Testis (tissue), 5 donors: ENCODE measurements at regions of chr9 and their contacts with region 1.

Region 1: GRCh38 chr9:107455425-107456135 is 34.0 kb downstream of the KLF4 start:
- DNase-seq: no peak
- H3K4me3 ChIP-seq: no peak overlapping the region
- H3K27ac ChIP-seq: no peak overlapping the region
- H3K4me1 ChIP-seq: no peaks in the 10 kb centered on the region
- H3K27me3 ChIP-seq: no peaks in the 10 kb centered on the region
- CTCF ChIP-seq: no peak
- POLR2A ChIP-seq: no peak

Region 2: DNA sequence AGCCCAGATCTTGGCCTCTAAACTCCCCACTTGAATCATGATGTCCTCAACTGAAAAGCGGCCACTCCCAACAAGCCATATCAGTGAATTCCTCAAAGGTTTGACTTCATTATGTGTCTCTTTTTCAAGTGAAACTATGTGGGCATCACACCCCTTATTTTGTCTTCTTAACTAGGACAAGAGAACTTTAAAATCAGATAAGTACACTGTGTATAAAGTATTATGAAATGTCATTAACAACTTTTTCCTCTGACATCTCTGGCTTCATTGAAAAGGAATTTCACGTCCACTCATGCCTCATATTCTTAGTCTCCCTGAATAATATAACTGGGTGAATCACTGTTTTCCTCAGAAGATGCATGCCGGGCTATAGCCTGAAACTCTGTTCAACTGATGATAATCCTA is 984.3 kb after region 1 on chr9:
- intact Hi-C with region 1: loop called (anchors 10 kb)
- DNase-seq: no peak
- H3K4me3 ChIP-seq: no peak overlapping the region
- H3K27ac ChIP-seq: no peak overlapping the region
- H3K4me1 ChIP-seq: no peaks in the 10 kb centered on the region
- H3K27me3 ChIP-seq: no peaks in the 10 kb centered on the region
- CTCF ChIP-seq: no peak
- POLR2A ChIP-seq: no peak